Activated CD4-positive, alpha-beta T cell treated with anti-CD3 and anti-CD28 coated beads for 36 hours (primary cell): ENCODE measurements at regions of chr1 and their contacts with region 1.

Region 1: DNA sequence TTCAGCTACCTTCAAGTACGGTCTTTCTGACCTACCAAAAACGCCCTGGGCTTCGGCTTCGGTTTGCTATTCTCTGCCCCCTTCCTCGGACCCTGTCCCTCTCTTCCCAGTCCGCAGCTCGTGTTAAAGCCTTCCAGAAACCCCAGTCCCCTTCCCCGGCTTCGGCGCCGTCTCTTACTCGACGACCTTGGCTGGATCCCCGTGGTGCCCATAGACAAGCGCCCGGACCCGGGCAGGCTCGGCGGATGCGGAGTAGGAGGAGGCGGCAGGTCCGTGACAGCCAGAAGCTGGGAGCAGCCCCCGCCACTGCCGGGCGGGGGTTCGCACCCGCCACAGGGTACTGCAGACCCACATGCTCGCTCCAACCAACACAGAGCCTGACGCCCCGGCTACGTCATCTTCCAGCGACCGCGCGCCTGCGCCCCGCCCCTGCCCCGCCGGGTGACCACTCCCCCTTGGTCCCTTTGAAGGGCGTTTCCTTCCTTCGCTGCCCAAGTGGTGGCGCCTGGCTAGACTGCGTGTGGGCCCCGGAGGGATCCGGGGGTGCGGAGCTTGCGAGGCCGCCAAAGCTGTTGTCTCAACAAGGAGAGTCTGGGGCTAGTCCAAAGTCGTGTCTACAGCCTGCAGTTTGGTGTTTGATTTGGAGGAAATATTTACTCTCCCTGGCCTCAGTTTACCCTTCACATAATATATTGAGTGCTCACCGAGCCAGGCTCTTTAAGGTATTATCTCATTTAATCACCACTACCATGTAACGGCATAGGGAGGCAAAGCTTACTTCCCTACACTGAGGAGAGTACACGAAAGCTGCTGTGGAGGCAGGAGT is at the start of gene MECR:
- DNase-seq: peak; percentile 97
- ATAC-seq: peak; percentile 97
- H3K4me3 Mint-ChIP-seq: peak within 1 kb of the TSS; percentile 94
- H3K27ac Mint-ChIP-seq: peak within 1 kb of the TSS; percentile 94
- H3K4me1 Mint-ChIP-seq: peaks cover 18% of the 10 kb centered on the region
- H3K27me3 Mint-ChIP-seq: peaks cover 9% of the 10 kb centered on the region
- total RNA-seq, gene MECR: 41.3 to 43.1 TPM

Region 2: DNA sequence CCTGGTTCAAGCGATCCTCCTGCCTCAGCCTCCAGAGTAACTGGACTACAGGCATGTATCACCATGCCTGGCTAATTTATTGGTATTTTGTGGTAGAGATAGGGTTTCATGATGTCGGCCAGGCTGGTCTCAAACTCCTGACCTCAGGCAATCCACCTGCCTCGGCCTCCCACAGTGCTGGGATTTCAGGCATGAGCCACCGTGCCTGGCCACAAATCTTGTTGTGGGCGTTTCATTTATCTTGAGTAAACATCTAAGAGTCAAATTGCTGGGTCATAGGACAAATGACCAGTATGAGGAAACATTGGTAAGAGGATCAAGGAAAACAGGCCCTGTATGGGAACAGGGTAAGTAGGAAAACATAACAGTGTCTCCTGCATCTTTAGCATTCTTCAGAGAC is 124.9 kb before region 1 on chr1:
- CTCF ChIA-PET with region 1: no interaction called
- POLR2A ChIA-PET with region 1: no interaction called
- intact Hi-C with region 1: no loop called
- DNase-seq: no peak
- ATAC-seq: no peak
- H3K4me3 Mint-ChIP-seq: no peak overlapping the region
- H3K27ac Mint-ChIP-seq: no peak overlapping the region
- H3K4me1 Mint-ChIP-seq: no peaks in the 10 kb centered on the region
- H3K27me3 Mint-ChIP-seq: no peaks in the 10 kb centered on the region

Region 3: DNA sequence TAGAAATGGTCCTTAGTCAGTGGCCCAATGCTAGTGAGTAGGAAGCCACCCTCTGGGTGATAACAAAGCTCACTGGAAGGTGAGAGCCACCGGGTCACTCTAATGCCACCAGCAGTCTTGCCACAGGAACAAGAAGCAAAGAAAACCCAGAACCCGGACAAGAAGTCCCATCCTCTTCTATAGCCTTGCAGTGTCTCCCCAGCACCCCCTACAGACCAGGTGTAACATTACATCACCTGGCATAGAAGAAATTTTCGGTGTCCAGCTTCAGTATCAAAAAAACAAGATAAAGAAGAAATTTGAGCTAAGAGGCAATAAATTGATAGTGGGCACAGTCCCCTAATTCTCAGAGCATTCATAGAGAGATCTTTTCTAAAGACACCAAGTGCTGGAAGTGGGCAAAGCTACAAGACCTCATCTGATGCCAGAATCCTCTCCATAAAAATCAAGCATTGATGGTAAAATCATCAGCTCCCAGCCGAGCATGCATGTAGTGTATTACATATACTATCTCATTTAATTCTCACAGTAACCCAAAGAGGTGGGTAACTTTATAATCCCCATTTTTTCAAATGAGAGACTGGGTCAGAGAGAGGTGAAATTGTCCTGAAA is 1001.6 kb after region 1 on chr1:
- CTCF ChIA-PET with region 1: no interaction called
- POLR2A ChIA-PET with region 1: no interaction called
- intact Hi-C with region 1: loop called in 1 of 2 experiments (anchors 10 kb)
- DNase-seq: peak; percentile 40
- ATAC-seq: no peak
- H3K4me3 Mint-ChIP-seq: no peak overlapping the region
- H3K27ac Mint-ChIP-seq: no peak overlapping the region
- H3K4me1 Mint-ChIP-seq: no peaks in the 10 kb centered on the region
- H3K27me3 Mint-ChIP-seq: peaks cover 4% of the 10 kb centered on the region

Region 4: DNA sequence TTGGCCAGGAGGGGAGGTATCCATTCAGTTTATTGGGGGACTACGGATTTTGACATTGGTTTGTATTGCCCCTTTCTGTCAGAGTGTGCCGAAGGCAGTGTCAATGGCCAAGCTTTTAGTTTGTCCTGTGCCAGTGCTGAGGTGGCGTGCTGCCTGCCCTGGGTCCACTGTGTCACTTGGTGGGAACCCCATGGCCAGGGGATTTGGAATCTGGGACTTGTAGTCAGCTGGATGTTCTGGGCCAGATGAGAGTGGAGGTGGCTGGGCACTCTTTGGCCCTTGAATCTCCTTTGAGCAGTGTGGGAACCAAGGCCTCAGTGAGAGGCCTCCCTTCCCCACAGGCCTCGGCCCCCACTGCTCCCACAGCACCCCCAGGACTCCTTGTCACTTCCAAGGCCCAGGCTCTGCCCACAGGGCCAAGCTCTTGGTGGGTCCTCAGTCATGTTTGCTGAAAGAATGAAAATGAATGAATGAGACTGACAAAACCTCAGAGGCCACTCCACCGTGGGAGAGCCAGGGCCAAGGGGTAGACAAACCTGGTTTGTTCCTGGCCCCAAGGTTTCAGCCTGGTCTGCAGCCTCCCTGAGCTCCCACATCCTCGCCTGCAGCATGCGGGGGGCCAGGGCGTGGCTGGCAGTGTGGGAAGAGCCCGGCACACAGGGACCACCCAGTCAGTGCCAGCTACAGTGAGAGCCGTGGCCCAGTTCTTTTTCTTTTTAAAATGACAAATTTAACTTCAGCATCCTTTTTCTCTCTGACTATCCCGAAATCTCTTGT is 1080.4 kb after region 1 on chr1:
- CTCF ChIA-PET with region 1: no interaction called
- POLR2A ChIA-PET with region 1: no interaction called
- intact Hi-C with region 1: no loop called
- DNase-seq: no peak
- ATAC-seq: no peak
- H3K4me3 Mint-ChIP-seq: no peak overlapping the region
- H3K27ac Mint-ChIP-seq: no peak overlapping the region
- H3K4me1 Mint-ChIP-seq: no peaks in the 10 kb centered on the region
- H3K27me3 Mint-ChIP-seq: peaks cover 20% of the 10 kb centered on the region